B cell (primary cell): ENCODE measurements at regions of chr19 and their contacts with region 1.

Region 1: DNA sequence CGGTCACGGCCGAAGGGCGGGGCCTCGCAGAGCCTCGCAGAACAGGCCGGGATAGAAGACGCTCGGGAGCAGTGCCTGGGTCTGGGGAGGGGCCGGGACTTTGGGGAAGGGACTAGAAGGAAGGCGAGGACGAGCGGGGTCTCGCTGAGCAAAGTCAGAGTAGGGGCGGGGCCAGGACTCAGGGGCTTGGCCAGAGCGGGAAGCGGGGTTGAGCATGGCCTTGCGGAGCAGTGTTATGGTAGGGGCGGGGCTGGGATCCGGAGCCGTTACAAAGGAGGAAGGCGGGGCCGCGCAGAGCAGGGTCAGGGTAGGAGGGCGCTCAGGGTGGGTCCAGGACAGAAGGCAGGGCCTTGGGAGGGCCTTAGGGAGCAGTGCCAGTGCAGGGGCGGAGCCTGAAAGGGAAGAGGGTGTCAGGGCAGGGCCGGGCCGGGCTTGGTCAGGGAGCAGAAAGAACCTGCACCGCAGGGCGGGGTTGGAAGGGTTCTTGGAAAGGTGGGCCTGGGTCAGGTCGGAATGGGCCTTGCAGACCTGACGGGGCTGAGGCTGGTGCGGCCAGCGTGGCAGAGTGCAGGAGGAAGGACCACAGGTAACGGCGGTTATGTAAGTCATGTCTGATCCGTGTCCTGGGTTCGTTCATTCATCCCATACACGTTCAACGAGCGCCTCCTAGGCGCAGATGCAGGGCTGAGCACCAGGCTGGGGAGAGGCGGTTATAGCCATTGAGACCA is 557 bp upstream of the ATP8B3 start:
- DNase-seq: peak; percentile 93
- ATAC-seq: peak; percentile 79
- H3K4me3 ChIP-seq: peak overlapping the region; percentile 35 to 73 (median 61)
- H3K4me3 Mint-ChIP-seq: peak overlapping the region; percentile 97
- H3K27ac ChIP-seq: peak overlapping the region in 1 of 2 donors; percentile 0
- H3K27ac Mint-ChIP-seq: peak overlapping the region; percentile 87
- H3K4me1 ChIP-seq: peaks cover 9 to 19% of the 10 kb centered on the region in 2 donors
- H3K4me1 Mint-ChIP-seq: peaks cover 12% of the 10 kb centered on the region
- H3K27me3 ChIP-seq: no peaks in the 10 kb centered on the region
- H3K27me3 Mint-ChIP-seq: no peaks in the 10 kb centered on the region
- CTCF ChIP-seq: peak; percentile 68

Region 2: GRCh38 chr19:1568320-1569019 is 244.2 kb before region 1 on chr19 and contains the start of gene MEX3D:
- CTCF ChIA-PET with region 1: no interaction called
- POLR2A ChIA-PET with region 1: no interaction called
- intact Hi-C with region 1: loop called (anchors 1 kb)
- DNase-seq: peak; percentile 90
- ATAC-seq: peak; percentile 94
- H3K4me3 ChIP-seq: peak within 1 kb of the TSS in 3 of 5 experiments; percentile 29 to 56 (median 38)
- H3K4me3 Mint-ChIP-seq: peak within 1 kb of the TSS; percentile 66
- H3K27ac ChIP-seq: no peak within 1 kb of the TSS
- H3K27ac Mint-ChIP-seq: peak within 1 kb of the TSS; percentile 41
- H3K4me1 ChIP-seq: peaks cover 11 to 13% of the 10 kb centered on the region in 2 donors
- H3K4me1 Mint-ChIP-seq: peaks cover 2% of the 10 kb centered on the region
- H3K27me3 ChIP-seq: peaks cover 0 to 18% (median 0%) of the 10 kb centered on the region in 4 experiments
- H3K27me3 Mint-ChIP-seq: peaks cover 3% of the 10 kb centered on the region
- CTCF ChIP-seq: no peak
- total RNA-seq, gene MEX3D: 3.0 and 4.2 TPM in 2 replicates

Region 3: DNA sequence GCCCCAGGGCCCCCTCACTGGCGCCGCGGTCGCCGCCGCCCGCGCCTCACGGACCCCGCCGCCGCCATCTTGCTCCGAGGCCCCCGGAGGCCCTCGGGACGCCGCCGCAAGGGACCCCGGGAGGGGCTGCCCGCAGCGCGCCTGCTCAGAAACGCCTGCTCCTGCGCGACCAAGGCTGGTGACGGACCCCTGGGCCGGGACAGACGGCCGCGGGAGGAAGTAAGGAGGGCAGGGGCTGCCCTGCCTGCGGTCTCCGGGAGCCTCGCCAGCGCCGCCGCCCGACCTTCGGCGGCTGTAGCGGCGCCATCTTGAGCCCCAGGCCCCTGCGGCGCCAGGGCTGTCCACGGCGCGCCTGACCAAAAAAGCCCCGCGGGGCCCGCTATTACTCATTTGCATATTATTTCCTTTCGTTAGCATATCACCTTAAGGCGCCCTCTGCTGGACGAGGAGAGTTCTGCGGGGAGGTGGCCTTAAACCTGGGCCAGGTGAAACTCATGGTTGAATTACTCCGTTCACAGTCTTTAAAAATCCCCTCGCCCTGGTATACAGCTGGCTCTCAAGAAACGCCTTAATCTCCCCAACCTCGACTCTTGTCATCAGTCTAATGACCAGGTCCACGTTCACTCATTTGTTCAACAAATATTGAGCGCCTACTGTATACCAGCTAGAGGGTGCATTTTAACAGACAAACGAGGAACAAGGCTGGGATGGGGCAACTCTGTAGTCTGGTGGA is 35.9 kb after region 1 on chr19 and contains the start of gene REXO1:
- CTCF ChIA-PET with region 1: no interaction called
- POLR2A ChIA-PET with region 1: no interaction called
- intact Hi-C with region 1: loop called (anchors 1 kb)
- DNase-seq: peak; percentile 100
- ATAC-seq: peak; percentile 73
- H3K4me3 ChIP-seq: peak within 1 kb of the TSS; percentile 47 to 95 (median 83)
- H3K4me3 Mint-ChIP-seq: peak within 1 kb of the TSS; percentile 90
- H3K27ac ChIP-seq: peak within 1 kb of the TSS; percentile 95 to 97
- H3K27ac Mint-ChIP-seq: peak within 1 kb of the TSS; percentile 93
- H3K4me1 ChIP-seq: peaks cover 59 to 80% of the 10 kb centered on the region in 2 donors
- H3K4me1 Mint-ChIP-seq: peaks cover 63% of the 10 kb centered on the region
- H3K27me3 ChIP-seq: no peaks in the 10 kb centered on the region
- H3K27me3 Mint-ChIP-seq: no peaks in the 10 kb centered on the region
- CTCF ChIP-seq: peak; percentile 87
- total RNA-seq, gene REXO1: 72.4 and 72.6 TPM in 2 replicates

Region 4: DNA sequence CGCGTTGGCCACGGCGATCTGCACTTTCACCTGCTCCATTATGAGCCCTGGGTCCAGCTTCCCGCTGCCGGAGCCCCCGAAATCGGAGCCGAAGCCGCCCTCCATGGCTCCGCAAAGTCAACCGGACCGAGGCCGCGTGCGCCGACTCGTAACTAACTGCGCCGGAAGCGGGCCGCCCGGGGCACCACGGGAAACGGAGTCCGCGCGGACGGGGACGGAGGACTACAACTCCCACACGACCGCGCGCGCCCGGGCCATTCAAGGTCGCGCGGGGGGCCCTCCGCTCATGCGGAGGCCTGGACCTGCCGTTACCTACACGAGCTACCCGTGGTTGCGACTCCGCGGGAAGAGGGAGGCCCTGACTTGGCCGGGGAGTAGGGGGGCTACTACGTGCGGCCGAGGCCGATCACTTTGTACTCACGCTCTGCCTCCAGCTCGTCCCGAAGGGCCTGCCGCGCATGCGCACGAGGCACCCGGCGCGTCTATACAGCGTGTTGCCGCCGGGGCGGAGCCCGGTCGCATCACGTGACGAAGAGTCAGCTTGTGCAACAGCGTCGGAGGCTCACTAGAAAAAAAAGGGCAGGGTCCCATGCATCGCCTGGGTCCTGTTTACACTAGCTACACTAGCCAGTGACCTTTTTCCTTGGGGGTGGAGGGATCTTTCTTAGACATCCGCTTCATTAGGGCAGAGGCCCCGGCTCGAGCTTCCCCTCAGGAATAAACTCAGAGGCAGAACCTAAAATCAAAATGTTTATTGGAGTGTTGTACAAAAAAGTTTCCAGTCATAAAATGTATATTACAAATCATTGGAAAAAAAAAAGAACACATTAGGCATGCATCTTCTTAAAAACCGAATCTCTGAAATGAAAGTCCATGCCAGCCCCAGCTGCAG is 615.0 kb after region 1 on chr19 and contains the start of gene TIMM13:
- CTCF ChIA-PET with region 1: no interaction called
- POLR2A ChIA-PET with region 1: interaction called, 11 read pairs
- intact Hi-C with region 1: loop called (anchors 5 kb)
- DNase-seq: peak; percentile 99
- ATAC-seq: peak; percentile 93
- H3K4me3 ChIP-seq: peak within 1 kb of the TSS; percentile 57 to 90 (median 74)
- H3K4me3 Mint-ChIP-seq: peak within 1 kb of the TSS; percentile 96
- H3K27ac ChIP-seq: peak within 1 kb of the TSS; percentile 75 to 80
- H3K27ac Mint-ChIP-seq: peak within 1 kb of the TSS; percentile 98
- H3K4me1 ChIP-seq: peaks cover 15 to 21% of the 10 kb centered on the region in 2 donors
- H3K4me1 Mint-ChIP-seq: peaks cover 13% of the 10 kb centered on the region
- H3K27me3 ChIP-seq: no peaks in the 10 kb centered on the region
- H3K27me3 Mint-ChIP-seq: no peaks in the 10 kb centered on the region
- CTCF ChIP-seq: no peak
- total RNA-seq, gene TIMM13: 31.9 and 32.5 TPM in 2 replicates